ENCODE measurements at regions of chr5 and their contacts with region 1.

Region 1: DNA sequence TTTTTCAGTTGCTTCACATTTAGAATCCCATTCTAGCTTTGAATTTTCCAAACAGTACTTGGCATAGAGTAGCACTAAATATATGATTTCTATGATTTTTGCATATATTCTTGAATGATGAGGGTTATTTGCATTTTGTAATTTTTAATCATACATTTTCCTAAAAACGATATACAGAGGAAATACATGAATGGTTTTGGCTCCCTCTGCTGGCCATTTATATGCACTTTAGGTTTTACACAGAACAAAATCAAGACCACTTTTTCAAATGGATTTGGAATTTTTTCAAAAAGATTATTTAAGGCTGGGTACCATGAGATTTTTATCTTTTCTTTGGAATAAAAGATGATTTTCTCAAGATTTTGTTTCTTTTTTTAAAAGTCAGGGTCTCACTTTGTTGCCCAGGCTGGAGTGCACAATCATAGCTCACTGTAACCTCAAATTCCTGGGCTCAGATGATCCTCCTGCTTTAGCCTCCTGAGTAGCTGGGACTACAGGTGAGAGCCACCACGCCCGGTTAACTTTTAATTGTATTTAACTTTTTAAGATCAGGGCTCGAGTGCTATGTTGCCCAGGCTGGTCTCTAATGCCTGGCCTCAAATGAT is 16.7 kb upstream of the COMMD10 start:
- DNase-seq: peak; percentile 74
- ATAC-seq: peak; percentile 43
- H3K4me3 ChIP-seq: no peak overlapping the region
- H3K4me3 Mint-ChIP-seq: no peak overlapping the region
- H3K27ac ChIP-seq: no peak overlapping the region
- H3K27ac Mint-ChIP-seq: no peak overlapping the region
- H3K4me1 ChIP-seq: no peaks in the 10 kb centered on the region
- H3K4me1 Mint-ChIP-seq: no peaks in the 10 kb centered on the region
- H3K27me3 ChIP-seq: no peaks in the 10 kb centered on the region
- H3K27me3 Mint-ChIP-seq: peaks cover 3% of the 10 kb centered on the region
- CTCF ChIP-seq: peak; percentile 96

Region 2: DNA sequence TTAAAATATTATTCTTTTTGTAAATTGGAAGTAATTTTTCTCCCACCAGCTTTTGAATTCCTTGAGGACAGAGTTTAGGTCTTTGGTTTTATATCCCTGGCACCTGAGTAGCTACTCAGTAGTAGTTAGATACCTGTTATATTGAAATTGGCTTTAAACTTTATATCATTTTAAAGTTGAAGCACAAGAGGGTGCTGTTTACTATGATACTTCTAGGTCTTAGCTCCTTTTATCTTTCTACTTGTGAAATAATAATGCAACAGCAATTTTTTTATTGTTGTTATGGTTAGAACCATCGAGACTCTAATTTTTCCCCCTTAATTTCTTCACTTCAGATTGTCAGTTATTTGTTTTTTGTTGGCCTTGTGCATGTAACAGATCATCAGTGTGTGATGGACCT is 180.1 kb before region 1 on chr5:
- CTCF ChIA-PET with region 1: interaction called, 19 read pairs
- POLR2A ChIA-PET with region 1: no interaction called
- intact Hi-C with region 1: loop called (anchors 1 kb)
- DNase-seq: peak; percentile 12
- ATAC-seq: no peak
- H3K4me3 ChIP-seq: no peak overlapping the region
- H3K4me3 Mint-ChIP-seq: no peak overlapping the region
- H3K27ac ChIP-seq: no peak overlapping the region
- H3K27ac Mint-ChIP-seq: no peak overlapping the region
- H3K4me1 ChIP-seq: no peaks in the 10 kb centered on the region
- H3K4me1 Mint-ChIP-seq: no peaks in the 10 kb centered on the region
- H3K27me3 ChIP-seq: no peaks in the 10 kb centered on the region
- H3K27me3 Mint-ChIP-seq: no peaks in the 10 kb centered on the region
- CTCF ChIP-seq: no peak

Region 3: GRCh38 chr5:116115163-116115562 is 47.0 kb after region 1 on chr5:
- CTCF ChIA-PET with region 1: no interaction called
- POLR2A ChIA-PET with region 1: no interaction called
- intact Hi-C with region 1: no loop called
- DNase-seq: no peak
- ATAC-seq: no peak
- H3K4me3 ChIP-seq: no peak overlapping the region
- H3K4me3 Mint-ChIP-seq: no peak overlapping the region
- H3K27ac ChIP-seq: no peak overlapping the region
- H3K27ac Mint-ChIP-seq: no peak overlapping the region
- H3K4me1 ChIP-seq: no peaks in the 10 kb centered on the region
- H3K4me1 Mint-ChIP-seq: peaks cover 6% of the 10 kb centered on the region
- H3K27me3 ChIP-seq: no peaks in the 10 kb centered on the region
- H3K27me3 Mint-ChIP-seq: no peaks in the 10 kb centered on the region
- CTCF ChIP-seq: no peak

Region 4: DNA sequence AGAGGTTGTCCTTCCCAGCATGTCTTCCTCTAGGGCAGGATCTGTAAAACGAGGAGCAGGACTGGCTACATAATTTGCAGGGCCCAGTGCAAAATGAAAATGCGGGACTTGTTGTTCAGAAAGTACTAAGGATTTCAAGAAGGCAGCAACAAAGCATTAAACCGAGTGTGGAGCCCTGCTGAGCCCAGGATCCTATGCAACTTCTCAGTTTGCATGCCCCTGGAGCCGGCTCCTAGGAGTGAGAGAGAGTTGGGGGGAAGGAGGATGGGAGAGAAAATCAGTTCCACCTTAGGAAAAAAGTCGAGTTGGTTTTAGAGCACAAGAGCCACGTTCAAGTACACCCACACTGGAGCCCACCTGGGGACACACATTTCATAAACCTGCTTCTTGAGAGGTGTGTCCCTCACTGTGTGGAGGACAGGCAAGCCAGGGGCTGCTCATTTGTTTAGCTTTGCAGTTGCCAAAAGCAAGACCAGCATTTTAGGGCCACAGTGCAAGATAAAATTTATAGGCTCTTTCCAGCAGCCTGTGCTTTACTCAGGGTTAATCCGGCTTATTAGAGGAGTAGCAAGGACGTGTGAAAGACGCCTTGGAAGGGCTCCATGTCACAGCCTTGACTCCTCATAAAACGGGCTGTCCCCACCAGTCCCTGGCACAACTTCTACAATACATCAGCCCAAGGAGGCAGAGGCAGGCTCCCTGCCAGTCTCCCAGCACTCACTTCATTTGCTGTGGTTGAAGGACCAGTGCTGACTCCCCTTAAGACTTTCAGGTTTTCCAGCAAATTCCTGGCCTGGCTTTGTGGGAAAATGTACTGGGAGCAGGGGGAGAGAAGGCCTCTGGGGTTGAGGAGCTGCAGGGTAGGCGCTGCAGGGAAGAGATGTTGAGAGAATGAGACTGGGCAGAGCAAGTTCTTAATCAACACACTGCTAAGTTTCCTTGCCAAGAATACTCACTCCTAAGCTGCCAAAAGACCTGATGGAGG is 666.2 kb after region 1 on chr5:
- CTCF ChIA-PET with region 1: no interaction called
- POLR2A ChIA-PET with region 1: no interaction called
- intact Hi-C with region 1: no loop called
- DNase-seq: no peak
- ATAC-seq: no peak
- H3K4me3 ChIP-seq: no peak overlapping the region
- H3K4me3 Mint-ChIP-seq: no peak overlapping the region
- H3K27ac ChIP-seq: no peak overlapping the region
- H3K27ac Mint-ChIP-seq: no peak overlapping the region
- H3K4me1 ChIP-seq: no peaks in the 10 kb centered on the region
- H3K4me1 Mint-ChIP-seq: no peaks in the 10 kb centered on the region
- H3K27me3 ChIP-seq: no peaks in the 10 kb centered on the region
- H3K27me3 Mint-ChIP-seq: peaks cover 9% of the 10 kb centered on the region
- CTCF ChIP-seq: no peak

Measured in B cell (primary cell).